Right cardiac atrium (tissue), 5 donors: ENCODE measurements at regions of chr1 and their contacts with region 1.

Region 1: GRCh38 chr1:223748773-223749733 is 36.7 kb downstream of the CAPN2 start:
- DNase-seq: peak; percentile 67 to 87 (median 87)
- ATAC-seq: peak; percentile 88 to 89
- H3K4me3 ChIP-seq: peak overlapping the region; percentile 6
- H3K27ac ChIP-seq: peak overlapping the region; percentile 43
- H3K4me1 ChIP-seq: peaks cover 4% of the 10 kb centered on the region
- H3K27me3 ChIP-seq: no peaks in the 10 kb centered on the region

Region 2: GRCh38 chr1:223695941-223696340 is 53.1 kb before region 1 on chr1:
- intact Hi-C with region 1: loop called in 2 of 4 experiments (anchors 5 kb)
- DNase-seq: no peak
- ATAC-seq: no peak
- H3K4me3 ChIP-seq: no peak overlapping the region
- H3K27ac ChIP-seq: no peak overlapping the region
- H3K4me1 ChIP-seq: no peaks in the 10 kb centered on the region
- H3K27me3 ChIP-seq: no peaks in the 10 kb centered on the region

Region 3: DNA sequence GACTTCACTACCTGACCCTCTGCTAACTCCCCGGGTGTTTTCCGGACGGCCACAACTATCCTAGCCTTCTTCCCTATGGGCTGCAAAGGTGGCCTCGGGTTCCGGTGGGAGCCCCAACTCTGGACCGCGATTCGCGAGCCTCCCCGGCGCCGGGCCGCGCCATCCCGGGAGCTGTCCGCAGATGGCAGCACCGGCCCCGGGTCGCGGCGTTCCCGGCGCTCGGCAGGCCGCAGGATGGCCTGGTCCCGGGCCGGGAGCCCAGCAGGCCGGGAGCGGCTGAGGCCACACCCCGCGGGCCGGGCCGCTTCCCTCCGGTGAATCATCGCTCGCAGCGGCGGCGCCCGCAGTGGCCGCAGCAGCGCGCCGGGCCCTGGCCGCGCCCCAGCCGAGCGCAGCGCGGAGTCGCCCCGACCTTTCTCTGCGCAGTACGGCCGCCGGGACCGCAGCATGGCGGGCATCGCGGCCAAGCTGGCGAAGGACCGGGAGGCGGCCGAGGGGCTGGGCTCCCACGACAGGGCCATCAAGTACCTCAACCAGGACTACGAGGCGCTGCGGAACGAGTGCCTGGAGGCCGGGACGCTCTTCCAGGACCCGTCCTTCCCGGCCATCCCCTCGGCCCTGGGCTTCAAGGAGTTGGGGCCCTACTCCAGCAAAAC is 36.7 kb before region 1 on chr1 and contains the start of gene CAPN2:
- intact Hi-C with region 1: loop called in 3 of 4 experiments (anchors 1 to 5 kb)
- DNase-seq: peak; percentile 89 to 94 (median 94)
- ATAC-seq: peak; percentile 92 to 96
- H3K4me3 ChIP-seq: peak within 1 kb of the TSS; percentile 66
- H3K27ac ChIP-seq: peak within 1 kb of the TSS; percentile 91
- H3K4me1 ChIP-seq: peaks cover 24% of the 10 kb centered on the region
- H3K27me3 ChIP-seq: no peaks in the 10 kb centered on the region
- total RNA-seq, gene CAPN2: 58.6 to 91.6 (median 73.2) TPM

Region 4: DNA sequence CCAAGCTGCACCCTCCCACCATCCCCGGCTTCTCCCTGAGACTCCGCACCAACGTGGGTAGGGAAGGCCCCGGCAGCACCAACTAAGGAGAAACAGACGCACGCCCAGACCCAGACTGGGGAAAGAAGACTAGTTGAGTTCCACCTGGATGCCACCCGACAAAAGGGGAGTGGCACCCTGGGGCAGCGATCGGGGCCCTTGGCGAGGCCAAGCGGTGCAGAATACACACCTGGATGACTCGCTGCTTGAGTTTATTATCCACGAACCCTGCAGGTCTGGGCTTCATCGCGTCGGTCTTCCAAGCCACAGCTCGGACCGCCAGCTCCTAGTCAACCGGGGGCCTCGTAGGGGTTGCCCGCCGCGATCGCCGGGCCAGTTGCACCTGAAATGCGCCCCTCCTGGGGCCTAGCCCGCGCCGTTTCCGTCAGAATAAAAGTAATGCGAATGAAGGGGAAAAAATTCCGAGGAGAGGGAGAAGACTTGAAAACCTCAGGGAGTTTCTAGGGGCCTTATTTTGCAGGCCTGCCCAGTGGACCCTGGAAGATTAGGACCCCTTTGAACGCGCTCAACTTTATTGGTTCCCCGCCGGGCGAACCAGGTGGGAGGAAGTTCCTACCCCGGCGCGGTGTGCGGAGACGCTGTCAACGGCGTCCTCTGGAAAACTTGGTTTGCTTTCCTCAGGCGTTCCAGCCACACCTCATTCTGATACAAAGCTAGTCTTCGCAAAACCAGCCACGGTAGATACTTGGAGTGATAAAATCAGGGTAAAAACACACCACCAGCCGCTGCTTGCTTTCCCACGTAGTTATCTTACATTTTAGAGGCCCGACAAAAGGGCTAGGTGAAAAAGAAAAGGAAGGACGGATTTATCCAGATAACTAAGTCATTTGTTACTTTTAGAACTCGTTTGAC is 581.0 kb after region 1 on chr1 and contains the start of gene NVL:
- intact Hi-C with region 1: no loop called
- DNase-seq: peak; percentile 86 to 91 (median 91)
- ATAC-seq: peak; percentile 98
- H3K4me3 ChIP-seq: peak within 1 kb of the TSS; percentile 74
- H3K27ac ChIP-seq: peak within 1 kb of the TSS; percentile 98
- H3K4me1 ChIP-seq: peaks cover 1% of the 10 kb centered on the region
- H3K27me3 ChIP-seq: no peaks in the 10 kb centered on the region
- total RNA-seq, gene NVL: 9.8 to 14.4 (median 11.9) TPM